GM10248 (cell line): ENCODE measurements at regions of chr6 and their contacts with region 1.

Region 1: GRCh38 chr6:155426408-155426945 is 29.2 kb downstream of the NOX3 start:
- DNase-seq: no peak
- CTCF ChIP-seq: no peak

Region 2: GRCh38 chr6:155377061-155377460 is 49.4 kb before region 1 on chr6:
- CTCF ChIA-PET with region 1: no interaction called
- POLR2A ChIA-PET with region 1: no interaction called
- DNase-seq: no peak
- CTCF ChIP-seq: no peak

Region 3: GRCh38 chr6:155436981-155437749 is 10.7 kb after region 1 on chr6:
- CTCF ChIA-PET with region 1: interaction called, 11 read pairs
- POLR2A ChIA-PET with region 1: no interaction called
- DNase-seq: no peak
- CTCF ChIP-seq: no peak

Region 4: GRCh38 chr6:155755452-155755851 is 329.0 kb after region 1 on chr6:
- CTCF ChIA-PET with region 1: no interaction called
- POLR2A ChIA-PET with region 1: no interaction called
- DNase-seq: no peak
- CTCF ChIP-seq: no peak